ENCODE measurements at regions of chr16 and their contacts with region 1.

Region 1: DNA sequence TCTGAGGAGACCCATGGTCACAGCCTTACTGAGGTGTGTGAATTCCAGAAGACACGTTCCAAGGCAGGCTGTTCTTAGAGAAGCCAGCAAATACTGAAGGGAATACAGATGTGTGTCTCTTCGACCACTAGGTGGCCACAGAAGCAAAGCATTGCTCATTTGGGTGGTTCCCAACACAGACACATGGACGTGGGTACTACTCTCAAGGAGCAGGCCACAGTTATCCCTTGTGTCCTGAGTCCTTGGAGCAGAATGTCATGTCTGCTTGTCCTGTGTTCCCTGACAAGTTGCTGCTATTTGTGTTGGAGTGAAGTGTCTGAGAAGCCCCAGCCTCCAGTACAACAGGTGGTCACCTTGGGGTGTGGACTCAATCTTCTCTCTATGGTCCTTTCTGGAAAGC is 30.3 kb downstream of the HMOX2 start:
- DNase-seq: peak; percentile 48
- H3K4me3 Mint-ChIP-seq: peak overlapping the region; percentile 22
- H3K27ac Mint-ChIP-seq: peak overlapping the region; percentile 85
- H3K4me1 Mint-ChIP-seq: peaks cover 47% of the 10 kb centered on the region
- H3K27me3 Mint-ChIP-seq: no peaks in the 10 kb centered on the region

Region 2: DNA sequence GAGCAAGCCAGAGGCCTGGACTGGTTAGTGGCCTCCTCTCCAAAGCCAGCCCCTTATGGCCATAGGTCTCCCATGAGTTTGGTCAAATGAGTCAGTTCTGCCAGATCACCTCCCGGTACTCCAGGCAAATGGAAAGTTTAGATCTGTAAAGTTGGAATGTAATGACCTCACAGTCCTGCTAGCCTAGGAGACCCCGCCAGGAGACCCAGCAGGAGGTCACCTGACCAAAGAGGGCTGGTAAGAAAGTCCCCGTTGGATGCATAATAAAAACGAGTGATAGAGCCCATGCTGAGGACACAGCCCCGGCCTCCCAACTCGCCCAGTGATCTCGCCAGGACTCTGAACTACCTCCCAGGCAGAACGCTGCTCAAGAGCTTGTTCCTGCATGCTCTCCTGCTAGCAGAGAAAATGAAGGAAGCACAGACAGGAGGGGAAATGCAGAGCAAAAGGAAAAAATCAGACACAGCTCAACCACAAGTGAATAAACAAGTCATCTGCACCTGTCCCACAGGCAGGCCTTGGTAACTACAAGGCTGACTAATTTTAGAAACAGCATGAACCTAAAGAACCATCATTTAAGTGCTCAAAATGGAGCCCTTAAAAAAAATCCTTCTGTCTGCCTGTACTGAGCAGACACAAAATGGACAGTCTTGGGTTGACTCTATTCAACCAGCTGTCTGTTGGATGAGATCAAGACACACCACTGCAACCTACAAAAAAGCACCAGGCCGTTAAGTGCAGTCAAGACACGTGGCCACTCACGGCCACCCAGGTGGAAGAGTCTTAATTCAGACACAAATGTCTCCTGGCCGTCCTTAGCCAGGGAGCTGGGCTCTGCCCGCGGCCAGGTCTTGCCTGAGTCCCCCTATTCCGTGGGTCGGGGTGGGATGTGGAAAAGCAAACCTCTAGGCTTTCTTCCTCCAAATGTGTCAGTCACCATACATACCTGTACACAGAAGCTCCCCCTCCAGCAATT is 22.9 kb after region 1 on chr16:
- intact Hi-C with region 1: no loop called
- DNase-seq: no peak
- H3K4me3 Mint-ChIP-seq: peak overlapping the region; percentile 49
- H3K27ac Mint-ChIP-seq: peak overlapping the region; percentile 73
- H3K4me1 Mint-ChIP-seq: peaks cover 24% of the 10 kb centered on the region
- H3K27me3 Mint-ChIP-seq: no peaks in the 10 kb centered on the region

Region 3: GRCh38 chr16:4580245-4580644 is 73.8 kb after region 1 on chr16:
- intact Hi-C with region 1: loop called (anchors 1 kb)
- DNase-seq: no peak
- H3K4me3 Mint-ChIP-seq: no peak overlapping the region
- H3K27ac Mint-ChIP-seq: no peak overlapping the region
- H3K4me1 Mint-ChIP-seq: no peaks in the 10 kb centered on the region
- H3K27me3 Mint-ChIP-seq: no peaks in the 10 kb centered on the region

Measured in activated T-helper 2 cell treated with anti-CD3 and anti-CD28 coated beads, Interferon-gamma antibody, Interleukin-2, Interleukin-4, amounts not matched to agents 10 μg/mL and 5 μg/mL and 100 μg/mL, durations not matched to agents 14 hours and 24 hours and 36 hours (primary cell).